ENCODE measurements at regions of chr16 and their contacts with region 1.

Region 1: DNA sequence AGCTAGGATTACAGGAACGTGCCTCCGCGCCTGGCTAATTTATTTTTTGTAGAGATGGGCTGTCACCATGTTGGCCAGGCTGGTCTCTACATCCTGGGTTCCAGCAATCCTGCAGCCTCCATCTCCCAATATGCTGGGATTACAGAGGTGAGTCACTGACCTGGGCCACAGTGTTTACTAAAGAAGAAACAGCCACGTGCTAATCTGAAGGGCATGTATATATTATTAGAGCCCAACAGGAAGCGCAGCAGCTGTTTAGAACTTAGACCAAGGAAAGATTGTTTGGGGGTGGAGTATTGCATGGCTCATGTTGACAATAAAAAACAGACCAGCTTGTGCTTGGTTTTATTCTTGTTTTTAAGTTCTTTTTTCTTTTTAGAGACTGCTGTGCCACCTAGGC is 60.2 kb downstream of the HAPSTR1 start:
- DNase-seq: no peak
- H3K4me3 ChIP-seq: no peak overlapping the region
- H3K27me3 ChIP-seq: no peaks in the 10 kb centered on the region
- CTCF ChIP-seq: no peak

Region 2: DNA sequence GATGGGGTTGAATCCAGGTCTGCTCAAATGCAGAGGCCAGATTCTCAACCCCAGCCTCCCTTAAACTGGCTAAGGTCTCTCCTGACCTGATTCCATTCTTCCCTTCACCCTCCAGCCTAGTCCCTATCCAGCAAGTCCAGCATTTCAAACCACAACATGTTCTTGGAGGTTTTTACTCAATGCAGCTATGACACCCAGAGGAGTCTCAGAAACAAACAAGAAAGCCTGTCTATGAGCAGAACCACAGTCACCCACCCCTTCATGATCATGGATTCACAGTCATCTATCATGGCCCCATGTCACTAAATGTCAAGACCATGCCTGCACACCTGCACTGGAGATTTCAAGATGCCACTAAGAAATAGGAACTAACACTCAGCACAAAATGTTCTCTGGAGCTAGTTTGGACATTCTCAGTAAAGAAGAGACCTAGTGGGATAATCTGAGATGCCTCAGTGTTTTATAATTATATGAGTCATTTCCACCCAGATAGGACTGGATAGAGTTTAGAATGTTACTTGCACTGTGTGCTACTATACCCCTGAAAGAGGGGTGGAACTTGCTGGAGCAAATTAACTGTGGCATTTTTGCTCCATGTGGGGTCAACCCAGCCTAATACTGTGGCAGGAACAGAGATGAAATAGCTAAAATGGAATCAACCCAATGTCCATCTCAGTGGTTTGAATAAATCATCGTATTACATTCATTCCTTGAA is 539.6 kb before region 1 on chr16:
- CTCF ChIA-PET with region 1: no interaction called
- POLR2A ChIA-PET with region 1: interaction called, 26 read pairs
- DNase-seq: no peak
- H3K4me3 ChIP-seq: no peak overlapping the region
- H3K27me3 ChIP-seq: 0 out of 2 replicates have a peak, but pooled peaks cover 2% of the 10 kb centered on the region
- CTCF ChIP-seq: no peak

Region 3: DNA sequence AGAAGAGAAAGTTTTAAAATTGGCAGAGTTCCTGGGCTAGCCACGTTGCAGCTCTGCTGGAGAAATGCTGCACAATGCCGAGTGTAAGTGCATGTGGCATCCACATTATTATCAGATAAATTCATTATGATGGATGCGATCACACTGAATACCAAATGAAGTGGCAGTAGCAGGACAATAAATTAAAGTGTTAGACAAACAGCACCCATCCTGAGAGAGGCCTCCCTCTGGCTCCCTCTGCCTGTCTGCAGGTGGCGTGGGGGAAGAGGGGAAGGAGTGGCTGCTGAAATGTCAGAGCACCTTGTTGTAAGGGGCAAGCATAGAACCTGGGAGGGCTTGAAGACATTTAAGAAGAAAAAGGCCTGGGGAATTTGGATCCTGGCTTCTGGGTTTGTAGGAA is 264.0 kb after region 1 on chr16:
- CTCF ChIA-PET with region 1: no interaction called
- POLR2A ChIA-PET with region 1: no interaction called
- DNase-seq: no peak
- H3K4me3 ChIP-seq: no peak overlapping the region
- H3K27me3 ChIP-seq: no peaks in the 10 kb centered on the region
- CTCF ChIP-seq: no peak

Region 4: GRCh38 chr16:9602189-9602588 is 450.6 kb after region 1 on chr16:
- CTCF ChIA-PET with region 1: no interaction called
- POLR2A ChIA-PET with region 1: no interaction called
- DNase-seq: no peak
- H3K4me3 ChIP-seq: no peak overlapping the region
- H3K27me3 ChIP-seq: no peaks in the 10 kb centered on the region
- CTCF ChIP-seq: no peak